IMR-90 (cell line): ENCODE measurements at regions of chr7 and their contacts with region 1.

Region 1: DNA sequence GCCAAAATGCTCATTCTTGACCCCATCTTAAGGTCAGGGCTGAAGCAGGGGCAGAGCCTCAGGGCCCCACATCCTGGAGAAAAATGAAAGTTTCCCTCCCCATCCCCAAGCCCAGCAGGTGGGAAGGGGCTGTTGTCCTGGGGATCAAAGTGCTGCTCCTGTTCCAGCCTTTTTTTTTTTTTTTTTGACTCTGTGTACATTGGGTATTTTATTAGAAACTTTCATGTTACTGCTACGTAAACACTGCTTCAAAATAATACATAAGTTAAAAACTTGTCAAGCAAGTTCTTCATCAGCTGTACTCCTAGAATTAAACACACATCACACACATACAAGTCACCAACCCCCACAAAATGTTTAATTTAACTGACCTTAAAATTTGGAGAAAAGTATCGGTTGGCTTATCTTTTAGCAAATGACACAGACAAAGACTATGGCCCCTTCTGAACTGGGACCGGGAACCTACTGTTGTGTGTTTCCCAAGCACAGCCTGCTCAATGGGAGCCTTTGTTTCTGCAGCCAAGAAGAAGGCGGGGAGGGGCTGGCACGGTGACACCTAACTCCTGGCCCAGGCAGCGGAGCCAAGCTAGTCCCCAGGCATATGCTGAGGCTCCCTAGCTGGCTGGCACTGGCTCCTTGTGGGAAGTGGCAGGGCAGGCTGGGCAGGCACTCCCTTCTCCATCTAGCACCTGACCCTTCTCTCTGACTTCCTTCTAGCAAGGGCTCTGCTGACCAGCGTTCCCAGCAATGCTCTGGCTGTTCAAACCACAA is 325.2 kb downstream of the PLXNA4 start:
- DNase-seq: no peak
- ATAC-seq: no peak
- H3K4me3 ChIP-seq: no peak overlapping the region
- H3K27ac ChIP-seq: no peak overlapping the region
- H3K4me1 ChIP-seq: no peaks in the 10 kb centered on the region
- H3K27me3 ChIP-seq: no peaks in the 10 kb centered on the region
- CTCF ChIP-seq: no peak
- POLR2A ChIP-seq: no peak
- RAD21 ChIP-seq: no peak

Region 2: GRCh38 chr7:131859147-131859821 is 391.8 kb before region 1 on chr7:
- CTCF ChIA-PET with region 1: no interaction called
- POLR2A ChIA-PET with region 1: no interaction called
- dilution Hi-C with region 1: no loop called
- in situ Hi-C with region 1: no loop called
- intact Hi-C with region 1: loop called (anchors 2 kb)
- DNase-seq: peak; percentile 62
- ATAC-seq: peak; percentile 99
- H3K4me3 ChIP-seq: no peak overlapping the region
- H3K27ac ChIP-seq: no peak overlapping the region
- H3K4me1 ChIP-seq: no peaks in the 10 kb centered on the region
- H3K27me3 ChIP-seq: peaks cover 2% of the 10 kb centered on the region; the same call in 1 of the 2 replicates
- CTCF ChIP-seq: peak; percentile 75
- POLR2A ChIP-seq: no peak
- RAD21 ChIP-seq: peak; percentile 62

Region 3: GRCh38 chr7:132004536-132005272 is 246.4 kb before region 1 on chr7:
- CTCF ChIA-PET with region 1: interaction called, 12 read pairs
- POLR2A ChIA-PET with region 1: no interaction called
- dilution Hi-C with region 1: no loop called
- in situ Hi-C with region 1: no loop called
- intact Hi-C with region 1: loop called (anchors 1 kb)
- DNase-seq: no peak
- ATAC-seq: peak; percentile 70; the same call in 1 of the 2 replicates
- H3K4me3 ChIP-seq: no peak overlapping the region
- H3K27ac ChIP-seq: no peak overlapping the region
- H3K4me1 ChIP-seq: no peaks in the 10 kb centered on the region
- H3K27me3 ChIP-seq: peaks cover 1% of the 10 kb centered on the region; the same call in 1 of the 2 replicates
- CTCF ChIP-seq: peak; percentile 36; the same call in 1 of the 2 replicates
- POLR2A ChIP-seq: no peak
- RAD21 ChIP-seq: peak; percentile 55